Activated B cell treated with CpG ODN at 0.5 μM for 24 hours (primary cell): ENCODE measurements at regions of chr14 and their contacts with region 1.

Region 1: DNA sequence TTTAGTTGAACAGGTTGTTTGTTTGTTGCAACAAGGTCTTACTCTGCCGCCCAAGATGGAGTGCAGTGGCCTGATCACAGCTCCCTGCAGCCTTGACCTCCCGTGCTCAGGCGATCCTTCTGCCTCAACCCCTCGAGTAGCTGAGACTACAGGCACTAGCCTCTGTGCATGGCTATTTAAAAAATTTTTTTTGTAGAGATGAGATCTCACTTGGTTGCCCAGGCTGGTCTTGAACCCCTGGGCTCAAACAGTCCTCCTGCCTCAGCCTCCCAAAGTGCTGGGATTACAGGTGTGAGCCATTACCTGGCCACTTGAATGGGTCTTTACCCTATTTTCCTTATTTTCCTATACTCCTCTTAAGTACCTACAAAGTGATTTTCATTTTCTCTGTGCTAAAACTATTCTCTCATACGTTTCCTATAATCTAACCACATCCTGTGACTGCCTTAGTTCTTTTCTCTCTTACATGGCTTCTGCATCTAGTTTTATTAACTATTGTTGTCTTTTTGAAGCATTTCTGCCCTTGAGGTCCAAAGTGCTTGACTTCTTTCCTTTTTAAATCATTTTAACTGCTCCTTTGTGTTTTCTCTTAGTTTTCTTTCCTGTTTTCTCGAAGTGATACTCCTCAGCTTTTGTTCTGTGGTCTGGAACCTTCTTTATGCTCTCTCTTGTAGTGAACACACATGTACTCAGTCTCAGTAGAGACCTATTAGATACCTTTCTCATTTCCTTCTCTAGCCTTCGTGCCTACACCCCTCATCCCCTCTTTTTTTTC is 14.1 kb downstream of the GPX2 start:
- DNase-seq: no peak
- ATAC-seq: no peak
- H3K4me3 Mint-ChIP-seq: no peak overlapping the region
- H3K27ac Mint-ChIP-seq: no peak overlapping the region
- H3K4me1 Mint-ChIP-seq: peaks cover 14% of the 10 kb centered on the region
- H3K27me3 Mint-ChIP-seq: no peaks in the 10 kb centered on the region
- CTCF ChIP-seq: no peak

Region 2: DNA sequence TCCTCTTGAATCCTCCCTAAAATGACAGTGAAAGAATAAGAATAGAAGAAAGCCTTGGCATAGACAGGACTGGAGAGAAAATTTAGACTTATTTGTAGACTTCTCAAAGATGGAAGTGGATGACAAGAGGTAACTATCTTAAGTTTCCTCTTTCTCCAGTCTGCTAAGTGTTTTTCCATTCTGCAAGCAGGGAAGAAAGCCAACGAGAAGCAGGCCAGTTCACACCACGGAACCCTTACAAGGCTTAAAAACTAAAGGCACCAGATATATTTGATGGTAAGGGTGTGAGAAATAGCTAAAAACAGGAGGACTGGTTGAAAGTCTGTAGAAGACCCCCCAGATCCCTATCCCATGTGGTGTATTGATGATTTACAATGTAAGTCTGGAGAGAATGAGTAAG is 1526.8 kb before region 1 on chr14:
- CTCF ChIA-PET with region 1: no interaction called
- POLR2A ChIA-PET with region 1: no interaction called
- intact Hi-C with region 1: no loop called
- DNase-seq: no peak
- ATAC-seq: no peak
- H3K4me3 Mint-ChIP-seq: no peak overlapping the region
- H3K27ac Mint-ChIP-seq: no peak overlapping the region
- H3K4me1 Mint-ChIP-seq: no peaks in the 10 kb centered on the region
- H3K27me3 Mint-ChIP-seq: no peaks in the 10 kb centered on the region
- CTCF ChIP-seq: no peak

Region 3: DNA sequence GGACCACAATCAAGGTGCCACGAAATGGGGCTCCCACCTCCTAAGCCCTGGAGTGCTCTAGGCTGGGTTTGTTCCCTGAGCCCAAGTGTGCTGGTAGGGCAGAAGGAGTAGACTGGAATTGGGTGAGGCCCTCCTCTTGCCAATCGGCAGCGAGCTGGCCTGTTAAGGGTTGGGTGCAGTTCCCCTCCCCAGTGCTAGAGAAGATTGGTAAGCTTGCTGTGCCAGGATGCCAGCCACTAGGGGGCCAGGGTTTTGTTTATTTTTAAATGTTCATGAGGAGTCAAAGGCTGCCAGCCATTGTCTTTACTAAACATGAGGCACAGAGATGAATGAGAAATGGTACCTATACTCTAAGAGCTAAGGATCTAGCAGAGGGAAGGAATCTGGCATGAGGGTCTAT is 128.4 kb before region 1 on chr14:
- CTCF ChIA-PET with region 1: no interaction called
- POLR2A ChIA-PET with region 1: no interaction called
- intact Hi-C with region 1: no loop called
- DNase-seq: no peak
- ATAC-seq: no peak
- H3K4me3 Mint-ChIP-seq: no peak overlapping the region
- H3K27ac Mint-ChIP-seq: no peak overlapping the region
- H3K4me1 Mint-ChIP-seq: no peaks in the 10 kb centered on the region
- H3K27me3 Mint-ChIP-seq: peaks cover 13% of the 10 kb centered on the region
- CTCF ChIP-seq: no peak

Region 4: DNA sequence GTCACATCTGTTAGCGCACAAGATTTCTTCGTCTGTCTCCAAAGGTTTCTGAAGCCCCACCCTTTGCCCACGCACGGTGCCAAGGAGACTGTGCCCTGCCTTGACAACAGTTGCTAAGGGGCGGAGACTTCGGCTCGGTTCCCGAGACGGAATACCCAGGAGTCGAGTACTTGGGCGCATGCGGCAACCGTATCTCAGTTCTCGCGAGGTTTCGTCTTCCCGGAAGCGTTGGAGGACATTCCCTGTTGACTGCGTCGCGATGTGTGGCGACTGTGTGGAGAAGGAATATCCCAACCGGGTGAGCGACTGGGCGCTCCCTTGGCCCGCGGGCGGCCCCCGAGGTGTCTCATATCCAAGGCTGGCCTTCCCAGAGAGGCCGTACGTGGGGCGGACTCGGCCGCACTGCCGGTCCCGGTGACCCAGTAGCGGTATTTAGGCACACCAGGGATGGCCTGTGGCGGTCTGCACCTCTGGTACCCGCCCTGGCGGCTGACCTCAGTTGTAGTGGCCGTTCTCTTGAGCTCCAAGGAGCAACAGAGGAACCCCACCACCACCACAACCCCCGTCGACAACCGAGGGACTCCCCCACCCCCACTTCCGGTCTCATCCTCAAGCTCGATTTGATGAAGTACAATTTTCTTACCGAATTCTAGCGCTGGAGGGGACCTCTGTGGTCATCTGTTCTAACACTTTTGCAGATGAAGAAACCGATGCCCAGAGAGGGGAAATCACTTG is 14.0 kb before region 1 on chr14 and contains the start of gene CHURC1:
- CTCF ChIA-PET with region 1: no interaction called
- POLR2A ChIA-PET with region 1: interaction called, 16 read pairs
- intact Hi-C with region 1: loop called (anchors 2 kb)
- DNase-seq: peak; percentile 89
- ATAC-seq: peak; percentile 98
- H3K4me3 Mint-ChIP-seq: peak within 1 kb of the TSS; percentile 92
- H3K27ac Mint-ChIP-seq: peak within 1 kb of the TSS; percentile 88
- H3K4me1 Mint-ChIP-seq: peaks cover 43% of the 10 kb centered on the region
- H3K27me3 Mint-ChIP-seq: peaks cover 3% of the 10 kb centered on the region
- CTCF ChIP-seq: no peak
- total RNA-seq, gene CHURC1: 69.6 and 83.8 TPM in 2 replicates